Posterior cingulate gyrus (tissue), 11 donors: ENCODE measurements at regions of chr1 and their contacts with region 1.

Region 1: DNA sequence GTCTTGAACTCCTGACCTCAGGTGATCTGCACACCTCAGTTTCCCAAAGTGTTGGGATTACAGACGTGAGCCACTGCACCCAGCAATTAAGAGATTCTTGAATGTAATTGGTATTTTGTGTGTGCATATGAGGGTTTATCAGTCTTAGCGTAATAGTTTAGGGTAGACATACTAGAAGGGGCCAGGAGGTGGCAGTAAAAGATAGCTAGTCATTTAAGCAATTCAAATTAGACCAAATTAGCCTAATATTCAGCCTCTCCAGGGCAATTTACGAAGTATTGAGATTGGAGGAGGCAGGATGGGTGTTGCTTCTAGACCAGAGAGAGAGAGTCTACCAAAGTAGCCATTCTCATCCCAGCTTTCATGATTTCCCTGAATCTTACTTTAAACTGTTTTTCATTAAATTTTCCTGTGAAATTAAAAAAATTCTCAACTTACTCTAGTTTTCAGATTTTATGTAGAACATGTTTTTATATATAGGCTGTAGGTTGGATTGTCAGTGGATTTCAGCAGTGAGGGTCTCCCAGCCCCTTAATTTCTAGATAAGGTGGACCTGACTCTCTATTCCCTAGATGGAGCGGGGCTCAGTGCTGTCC is 119.7 kb downstream of the HHAT start:
- DNase-seq: peak in 1 of 10 donors; percentile 35

Region 2: DNA sequence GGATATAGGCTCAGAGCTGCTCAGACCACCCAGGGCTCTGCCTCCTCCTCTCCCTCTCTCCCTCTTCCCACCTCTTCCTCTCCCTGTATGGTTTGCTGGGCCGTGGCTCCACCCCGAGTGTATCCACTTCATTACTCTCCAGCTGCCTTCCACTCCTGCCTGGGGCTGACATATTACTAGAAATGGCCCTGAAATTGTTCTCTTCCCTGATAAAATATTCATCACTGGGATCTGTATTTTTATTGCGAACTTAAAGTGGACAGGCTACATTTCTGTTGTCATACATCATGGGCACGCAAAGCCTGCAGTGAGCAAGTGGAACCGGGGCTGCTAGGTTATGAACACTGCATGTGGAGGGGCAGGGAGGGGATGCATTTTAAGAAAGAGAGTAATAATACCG is 105.3 kb after region 1 on chr1:
- intact Hi-C with region 1: no loop called
- DNase-seq: no peak

Region 3: DNA sequence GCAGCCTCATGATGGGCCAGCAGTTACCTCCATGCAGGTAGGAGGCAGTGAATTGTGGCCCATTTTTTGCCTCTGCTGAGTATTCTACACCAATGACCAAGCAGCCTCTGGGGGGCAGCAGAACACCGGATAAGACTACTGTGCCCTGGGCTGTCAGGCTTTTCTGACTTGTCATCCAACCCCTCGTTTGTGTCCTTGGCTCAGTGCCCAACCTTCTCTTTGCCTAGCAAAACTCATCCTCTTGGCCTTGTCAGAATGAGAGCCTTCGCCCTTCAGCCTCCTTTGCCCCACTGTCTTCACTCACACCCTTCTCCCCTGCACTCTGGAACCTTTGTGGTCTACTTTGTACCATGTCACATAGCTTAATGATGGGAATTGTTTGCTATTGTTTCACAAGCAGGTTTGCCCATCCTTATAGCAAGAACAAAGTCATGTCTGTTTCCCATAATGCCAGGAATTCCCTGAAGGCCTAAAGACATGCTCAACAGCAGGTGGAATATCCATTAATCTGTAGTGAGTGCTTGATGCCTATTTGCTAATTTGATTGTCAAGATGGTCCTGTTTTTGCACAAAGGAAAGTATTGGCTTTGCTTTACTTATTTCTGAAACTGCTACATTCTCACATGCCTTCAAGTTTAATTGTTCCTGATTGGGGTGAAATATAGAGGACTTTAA is 136.2 kb after region 1 on chr1:
- intact Hi-C with region 1: loop called (anchors 1 kb)
- DNase-seq: peak; percentile 77 to 98 (median 93)